Right lobe of liver (tissue), 6 donors: ENCODE measurements at regions of chr15 and their contacts with region 1.

Region 1: GRCh38 chr15:65032801-65033537 is 3.5 kb upstream of the MTFMT start:
- DNase-seq: peak; percentile 80 to 93 (median 92)
- ATAC-seq: peak; percentile 90 to 95 (median 91)
- H3K4me3 ChIP-seq: no peak overlapping the region
- H3K27ac ChIP-seq: peak overlapping the region; percentile 4 to 69 (median 28)
- H3K4me1 ChIP-seq: peaks cover 0 to 24% (median 10%) of the 10 kb centered on the region in 4 donors
- H3K27me3 ChIP-seq: no peaks in the 10 kb centered on the region
- CTCF ChIP-seq: peak; percentile 79 to 91 (median 87)
- POLR2A ChIP-seq: no peak

Region 2: DNA sequence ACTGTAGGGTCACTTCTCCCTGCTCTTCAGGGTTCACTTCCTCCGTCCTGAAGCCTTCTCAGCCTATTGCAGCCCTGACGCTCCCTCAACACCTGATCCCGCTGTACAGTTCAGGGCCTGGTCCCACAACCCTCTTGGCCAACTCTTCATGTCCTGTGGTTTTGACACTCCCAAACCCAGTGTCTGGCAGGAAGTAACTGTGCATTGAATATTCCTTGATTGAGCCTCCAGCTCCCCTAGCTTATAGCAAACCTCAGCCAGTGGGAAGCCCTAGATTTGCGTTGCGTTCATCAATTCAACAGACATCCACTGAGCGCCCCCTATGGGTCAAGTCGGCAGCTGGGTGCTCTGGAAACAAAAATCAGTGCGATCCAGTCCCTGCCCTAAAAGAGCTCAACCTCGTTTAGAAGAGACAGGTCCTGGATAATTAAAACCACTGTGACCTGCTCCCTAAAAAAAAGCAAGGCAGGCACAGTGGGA is 68.5 kb after region 1 on chr15:
- intact Hi-C with region 1: loop called in 1 of 2 experiments (anchors 5 kb)
- DNase-seq: peak in 2 of 3 donors; percentile 67 to 77
- ATAC-seq: peak; percentile 74 to 94 (median 82)
- H3K4me3 ChIP-seq: no peak overlapping the region
- H3K27ac ChIP-seq: no peak overlapping the region
- H3K4me1 ChIP-seq: no peaks in the 10 kb centered on the region
- H3K27me3 ChIP-seq: no peaks in the 10 kb centered on the region
- CTCF ChIP-seq: peak; percentile 74 to 88 (median 80)
- POLR2A ChIP-seq: no peak

Region 3: DNA sequence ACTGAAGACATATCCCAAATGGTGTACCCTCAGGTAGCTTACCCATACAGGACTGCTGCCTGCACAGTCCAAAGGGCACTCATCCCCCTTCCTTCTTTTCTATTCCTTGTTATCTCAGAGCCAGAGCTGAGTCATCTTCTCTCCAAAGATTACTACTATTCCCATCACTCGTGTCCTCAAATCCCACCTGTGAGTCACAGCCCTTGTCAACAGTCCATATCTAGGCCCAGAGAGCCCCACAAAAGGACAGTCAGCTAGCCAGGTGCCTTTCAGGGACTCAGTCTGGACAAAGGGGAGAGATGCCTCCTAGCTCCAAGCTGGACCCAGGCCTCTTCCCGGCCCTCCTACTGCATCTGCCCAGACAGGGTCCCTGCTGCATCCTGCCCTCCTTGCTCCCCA is 242.8 kb after region 1 on chr15:
- intact Hi-C with region 1: loop called in 1 of 2 experiments (anchors 10 kb)
- DNase-seq: no peak
- ATAC-seq: peak in 1 of 4 donors; percentile 74
- H3K4me3 ChIP-seq: no peak overlapping the region
- H3K27ac ChIP-seq: no peak overlapping the region
- H3K4me1 ChIP-seq: no peaks in the 10 kb centered on the region
- H3K27me3 ChIP-seq: no peaks in the 10 kb centered on the region
- CTCF ChIP-seq: no peak
- POLR2A ChIP-seq: no peak